ENCODE measurements at regions of chr9 and their contacts with region 1.

Region 1: DNA sequence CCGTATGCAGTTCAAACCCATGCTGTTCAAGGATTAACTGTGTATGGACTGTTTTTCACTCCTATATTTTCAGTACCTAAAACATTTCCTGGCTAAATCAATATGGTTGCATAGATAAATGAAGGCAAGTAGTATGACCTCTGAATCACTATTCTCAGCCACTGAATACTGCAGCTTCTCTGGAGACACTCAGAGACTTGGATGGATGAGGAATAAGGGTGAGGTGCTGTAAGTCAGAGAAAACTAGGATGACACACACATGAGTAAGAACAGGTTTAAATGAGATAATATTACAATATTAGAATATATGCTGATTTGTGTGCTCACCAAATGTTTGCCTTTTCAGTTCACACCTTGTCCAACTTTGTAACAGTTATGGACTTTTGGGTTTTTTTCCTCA is 26.0 kb upstream of the ANXA1 start:
- DNase-seq: no peak
- ATAC-seq: no peak
- H3K4me3 ChIP-seq: no peak overlapping the region
- H3K27ac ChIP-seq: no peak overlapping the region
- H3K4me1 ChIP-seq: no peaks in the 10 kb centered on the region
- H3K27me3 ChIP-seq: no peaks in the 10 kb centered on the region
- CTCF ChIP-seq: no peak

Region 2: GRCh38 chr9:73167614-73168013 is 42.0 kb after region 1 on chr9:
- intact Hi-C with region 1: loop called in 1 of 10 experiments (anchors 5 kb)
- DNase-seq: no peak
- ATAC-seq: no peak
- H3K4me3 ChIP-seq: no peak overlapping the region
- H3K27ac ChIP-seq: peak overlapping the region in 1 of 10 donors; percentile 11
- H3K4me1 ChIP-seq: no peaks in the 10 kb centered on the region
- H3K27me3 ChIP-seq: no peaks in the 10 kb centered on the region
- CTCF ChIP-seq: no peak